Activated naive CD4-positive, alpha-beta T cell treated with anti-CD3 and anti-CD28 coated beads for 36 hours (primary cell): ENCODE measurements at regions of chr12 and their contacts with region 1.

Region 1: GRCh38 chr12:132153501-132154340 is 9.5 kb downstream of the NOC4L start:
- DNase-seq: peak; percentile 69
- H3K4me3 Mint-ChIP-seq: no peak overlapping the region
- H3K27ac Mint-ChIP-seq: no peak overlapping the region
- H3K4me1 Mint-ChIP-seq: no peaks in the 10 kb centered on the region
- H3K27me3 Mint-ChIP-seq: no peaks in the 10 kb centered on the region

Region 2: GRCh38 chr12:132218915-132219314 is 65.2 kb after region 1 on chr12:
- CTCF ChIA-PET with region 1: interaction called, 7 read pairs
- intact Hi-C with region 1: loop called (anchors 1 kb)
- DNase-seq: peak; percentile 54
- H3K4me3 Mint-ChIP-seq: no peak overlapping the region
- H3K27ac Mint-ChIP-seq: no peak overlapping the region
- H3K4me1 Mint-ChIP-seq: peaks cover 7% of the 10 kb centered on the region
- H3K27me3 Mint-ChIP-seq: no peaks in the 10 kb centered on the region

Region 3: GRCh38 chr12:132560614-132561426 is 407.1 kb after region 1 on chr12:
- CTCF ChIA-PET with region 1: no interaction called
- intact Hi-C with region 1: loop called (anchors 2 kb)
- DNase-seq: peak; percentile 83
- H3K4me3 Mint-ChIP-seq: peak overlapping the region; percentile 75
- H3K27ac Mint-ChIP-seq: no peak overlapping the region
- H3K4me1 Mint-ChIP-seq: peaks cover 5% of the 10 kb centered on the region
- H3K27me3 Mint-ChIP-seq: peaks cover 7% of the 10 kb centered on the region

Region 4: DNA sequence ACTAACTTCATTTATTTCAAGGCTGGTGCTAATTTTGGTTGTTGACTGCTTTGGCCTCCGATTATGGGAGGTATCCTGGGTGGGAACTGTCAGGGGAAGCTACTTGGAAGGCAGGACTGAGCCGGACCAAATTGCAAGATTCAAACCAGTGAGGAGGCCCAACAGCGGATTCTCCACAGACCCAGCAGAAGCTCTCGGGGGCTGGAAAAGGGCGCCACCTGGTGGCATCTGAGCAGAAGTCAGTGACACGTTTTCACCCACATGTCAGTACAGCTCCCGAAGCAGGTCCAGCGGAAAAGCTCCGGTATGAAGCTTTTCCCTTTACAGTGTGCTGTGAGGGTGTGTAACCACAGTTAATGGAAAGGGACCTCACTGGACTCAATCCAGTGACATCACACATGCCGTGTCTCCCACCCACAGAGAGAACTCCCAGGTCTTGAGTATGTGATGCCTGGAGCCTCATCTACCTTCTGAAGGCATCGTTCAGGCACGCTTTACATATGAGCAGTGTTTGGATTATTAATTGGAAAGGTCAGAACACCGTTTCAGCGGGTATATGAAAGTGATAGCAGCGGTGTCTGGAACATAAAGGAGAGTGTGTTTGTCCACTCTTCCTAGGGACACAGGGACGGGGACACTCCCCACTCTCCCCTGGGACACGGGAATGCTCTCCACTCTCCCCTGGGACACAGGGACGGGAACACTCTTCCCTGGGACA is 461.3 kb after region 1 on chr12:
- CTCF ChIA-PET with region 1: interaction called, 8 read pairs
- intact Hi-C with region 1: loop called (anchors 1 kb)
- DNase-seq: peak; percentile 88
- H3K4me3 Mint-ChIP-seq: no peak overlapping the region
- H3K27ac Mint-ChIP-seq: no peak overlapping the region
- H3K4me1 Mint-ChIP-seq: peaks cover 15% of the 10 kb centered on the region
- H3K27me3 Mint-ChIP-seq: peaks cover 41% of the 10 kb centered on the region